Ovary (tissue), 10 donors: ENCODE measurements at regions of chr2 and their contacts with region 1.

Region 1: DNA sequence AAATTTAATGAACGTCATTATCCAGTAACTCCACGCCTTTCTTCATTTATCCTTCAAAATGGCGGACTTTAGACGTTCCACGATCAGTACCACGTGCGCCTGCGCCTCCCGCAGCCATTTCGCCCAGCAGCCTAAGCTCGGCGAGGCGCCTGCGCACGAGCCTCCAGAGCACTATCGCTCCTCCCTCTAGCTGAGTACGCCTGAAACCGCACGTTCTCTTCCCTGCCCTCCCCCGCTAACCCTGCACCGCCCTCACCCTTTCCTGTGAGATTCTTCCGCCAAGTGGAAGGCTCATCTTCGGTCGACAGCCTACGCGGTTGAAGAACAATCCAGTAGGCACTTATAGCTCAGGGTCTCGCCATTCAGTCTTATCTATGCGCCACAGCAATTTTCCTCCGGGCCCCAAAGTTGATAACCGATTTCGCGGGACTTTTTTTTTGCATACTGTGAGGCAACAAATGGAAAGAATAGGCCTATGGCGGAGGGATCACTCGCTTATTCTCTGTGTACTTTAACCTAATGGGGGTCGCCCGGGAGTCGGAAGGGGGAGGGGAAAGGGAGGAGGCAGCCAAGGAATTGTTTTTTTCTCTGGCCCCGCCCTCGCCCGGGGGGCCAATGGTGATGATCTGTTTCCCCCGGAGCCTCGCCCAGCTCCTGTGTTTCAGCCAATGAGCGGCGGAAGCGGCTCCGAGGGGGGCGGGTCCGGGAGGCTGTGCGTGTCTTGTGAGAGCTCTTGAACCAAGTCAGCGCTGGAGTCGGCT is at the start of gene KDM3A:
- DNase-seq: peak; percentile 99 to 100 (median 99)
- H3K4me3 ChIP-seq: peak within 1 kb of the TSS; percentile 68
- H3K27ac ChIP-seq: peak within 1 kb of the TSS; percentile 93 to 97
- H3K4me1 ChIP-seq: peaks cover 10% of the 10 kb centered on the region
- H3K27me3 ChIP-seq: no peaks in the 10 kb centered on the region
- CTCF ChIP-seq: peak in 1 of 3 donors; percentile 18
- EP300 ChIP-seq: no peak
- POLR2A ChIP-seq: peak; percentile 86
- total RNA-seq, gene KDM3A: 31.7 to 53.0 (median 40.8) TPM

Region 2: GRCh38 chr2:86195055-86195807 is 245.6 kb before region 1 on chr2 and contains the start of gene IMMT:
- intact Hi-C with region 1: loop called in 1 of 4 experiments (anchors 5 kb)
- DNase-seq: peak; percentile 95 to 98 (median 96)
- H3K4me3 ChIP-seq: peak within 1 kb of the TSS; percentile 99
- H3K27ac ChIP-seq: peak within 1 kb of the TSS; percentile 77 to 98
- H3K4me1 ChIP-seq: peaks cover 11% of the 10 kb centered on the region
- H3K27me3 ChIP-seq: no peaks in the 10 kb centered on the region
- CTCF ChIP-seq: peak in 2 of 3 donors; percentile 17 to 34
- EP300 ChIP-seq: no peak
- POLR2A ChIP-seq: peak; percentile 92
- total RNA-seq, gene IMMT: 22.8 to 64.9 (median 48.4) TPM

Region 3: GRCh38 chr2:86280191-86280667 is 160.6 kb before region 1 on chr2:
- intact Hi-C with region 1: no loop called
- DNase-seq: no peak
- H3K4me3 ChIP-seq: no peak overlapping the region
- H3K27ac ChIP-seq: no peak overlapping the region
- H3K4me1 ChIP-seq: peaks cover 2% of the 10 kb centered on the region
- H3K27me3 ChIP-seq: no peaks in the 10 kb centered on the region
- CTCF ChIP-seq: no peak
- EP300 ChIP-seq: no peak
- POLR2A ChIP-seq: no peak

Region 4: DNA sequence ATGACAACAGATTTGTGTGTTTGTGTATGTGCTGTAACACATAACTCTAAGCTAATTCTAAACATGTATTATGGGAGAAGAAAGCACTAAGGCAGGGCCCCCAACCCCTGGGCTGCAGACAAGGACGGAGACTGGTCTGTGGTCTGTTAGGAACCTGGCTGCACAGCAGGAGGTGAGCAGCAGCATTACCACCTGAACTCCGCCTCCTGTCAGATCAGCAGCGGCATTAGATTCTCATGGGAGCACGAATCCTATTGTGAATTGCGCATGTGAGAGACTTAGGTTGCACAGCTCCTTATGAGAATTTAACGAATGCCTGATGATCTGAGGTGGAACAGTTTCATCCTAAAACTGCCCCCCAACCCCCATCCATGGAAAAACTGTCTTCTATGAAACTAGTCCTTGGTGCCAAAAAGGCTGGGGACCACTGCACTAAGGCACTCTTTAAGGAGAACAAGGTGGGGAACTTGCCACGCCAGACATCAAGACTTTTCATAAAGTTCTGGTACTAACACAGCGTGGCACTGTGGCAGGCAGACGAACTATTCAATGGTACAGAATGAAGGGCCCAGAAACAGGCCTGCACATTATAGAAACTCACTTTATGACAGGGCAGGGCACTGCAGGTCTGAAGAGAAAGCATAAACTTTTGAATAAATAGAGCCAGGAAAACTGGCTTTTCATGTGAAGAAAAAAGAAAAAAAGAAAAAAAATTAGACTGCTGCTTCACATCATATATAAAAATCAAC is 117.4 kb before region 1 on chr2:
- intact Hi-C with region 1: no loop called
- DNase-seq: no peak
- H3K4me3 ChIP-seq: no peak overlapping the region
- H3K27ac ChIP-seq: no peak overlapping the region
- H3K4me1 ChIP-seq: no peaks in the 10 kb centered on the region
- H3K27me3 ChIP-seq: no peaks in the 10 kb centered on the region
- CTCF ChIP-seq: no peak
- EP300 ChIP-seq: no peak
- POLR2A ChIP-seq: no peak

Region 5: DNA sequence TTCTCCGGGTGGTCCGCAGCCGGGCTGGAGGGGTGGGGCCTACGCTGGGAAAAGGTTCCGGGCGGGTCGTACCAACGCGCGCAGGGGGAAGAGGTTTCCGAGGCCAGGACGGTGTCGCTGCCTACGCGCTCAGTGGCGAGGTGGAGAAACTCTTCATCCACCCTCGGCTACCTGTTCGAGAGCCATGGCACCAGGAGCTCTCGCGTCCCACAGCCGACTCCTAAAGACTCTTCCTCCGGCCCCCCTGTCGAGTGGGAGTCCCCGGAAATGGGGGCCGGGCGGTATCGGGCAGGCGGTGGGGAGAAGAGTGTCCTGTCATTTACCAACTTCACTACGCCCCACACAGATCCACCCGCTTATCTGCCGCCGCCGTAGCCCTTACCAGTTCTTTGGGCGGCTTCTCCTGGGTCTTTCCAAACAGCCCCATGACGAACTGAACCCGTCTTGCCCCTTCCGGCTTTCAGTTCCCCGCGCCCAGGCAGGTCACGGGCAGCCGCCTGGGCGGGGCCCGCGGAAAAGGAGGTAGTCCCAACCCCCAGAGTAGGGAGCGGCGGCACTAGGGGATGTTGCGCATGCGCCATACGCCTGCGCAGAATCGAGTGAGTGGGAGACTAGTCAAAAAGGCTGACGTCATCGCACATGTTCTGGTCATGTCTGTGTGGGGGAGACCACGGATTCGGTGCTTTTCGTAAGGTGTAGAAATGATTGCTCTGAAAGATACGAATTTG is 122.3 kb after region 1 on chr2 and contains the start of gene CHMP3:
- intact Hi-C with region 1: loop called in 3 of 4 experiments (anchors 5 to 10 kb)
- DNase-seq: peak; percentile 96 to 98 (median 97)
- H3K4me3 ChIP-seq: peak within 1 kb of the TSS; percentile 89
- H3K27ac ChIP-seq: peak within 1 kb of the TSS; percentile 97 to 100
- H3K4me1 ChIP-seq: peaks cover 8% of the 10 kb centered on the region
- H3K27me3 ChIP-seq: no peaks in the 10 kb centered on the region
- CTCF ChIP-seq: no peak
- EP300 ChIP-seq: no peak
- POLR2A ChIP-seq: peak; percentile 78
- total RNA-seq, gene CHMP3: 38.6 to 127 (median 94.2) TPM

Region 6: GRCh38 chr2:86623651-86624541 is 183.1 kb after region 1 on chr2 and contains the start of gene RNF103:
- intact Hi-C with region 1: loop called in 2 of 4 experiments (anchors 5 kb)
- DNase-seq: peak; percentile 96 to 98 (median 98)
- H3K4me3 ChIP-seq: peak within 1 kb of the TSS; percentile 50
- H3K27ac ChIP-seq: peak within 1 kb of the TSS; percentile 98
- H3K4me1 ChIP-seq: peaks cover 2% of the 10 kb centered on the region
- H3K27me3 ChIP-seq: no peaks in the 10 kb centered on the region
- CTCF ChIP-seq: no peak
- EP300 ChIP-seq: peak; percentile 26
- POLR2A ChIP-seq: peak; percentile 97
- total RNA-seq, gene RNF103: 24.9 to 38.4 (median 32.4) TPM